ENCODE measurements at regions of chr1 and their contacts with region 1.

Region 1: GRCh38 chr1:43814401-43814800 is 107.1 kb downstream of the ST3GAL3 start:
- DNase-seq: no peak

Region 2: DNA sequence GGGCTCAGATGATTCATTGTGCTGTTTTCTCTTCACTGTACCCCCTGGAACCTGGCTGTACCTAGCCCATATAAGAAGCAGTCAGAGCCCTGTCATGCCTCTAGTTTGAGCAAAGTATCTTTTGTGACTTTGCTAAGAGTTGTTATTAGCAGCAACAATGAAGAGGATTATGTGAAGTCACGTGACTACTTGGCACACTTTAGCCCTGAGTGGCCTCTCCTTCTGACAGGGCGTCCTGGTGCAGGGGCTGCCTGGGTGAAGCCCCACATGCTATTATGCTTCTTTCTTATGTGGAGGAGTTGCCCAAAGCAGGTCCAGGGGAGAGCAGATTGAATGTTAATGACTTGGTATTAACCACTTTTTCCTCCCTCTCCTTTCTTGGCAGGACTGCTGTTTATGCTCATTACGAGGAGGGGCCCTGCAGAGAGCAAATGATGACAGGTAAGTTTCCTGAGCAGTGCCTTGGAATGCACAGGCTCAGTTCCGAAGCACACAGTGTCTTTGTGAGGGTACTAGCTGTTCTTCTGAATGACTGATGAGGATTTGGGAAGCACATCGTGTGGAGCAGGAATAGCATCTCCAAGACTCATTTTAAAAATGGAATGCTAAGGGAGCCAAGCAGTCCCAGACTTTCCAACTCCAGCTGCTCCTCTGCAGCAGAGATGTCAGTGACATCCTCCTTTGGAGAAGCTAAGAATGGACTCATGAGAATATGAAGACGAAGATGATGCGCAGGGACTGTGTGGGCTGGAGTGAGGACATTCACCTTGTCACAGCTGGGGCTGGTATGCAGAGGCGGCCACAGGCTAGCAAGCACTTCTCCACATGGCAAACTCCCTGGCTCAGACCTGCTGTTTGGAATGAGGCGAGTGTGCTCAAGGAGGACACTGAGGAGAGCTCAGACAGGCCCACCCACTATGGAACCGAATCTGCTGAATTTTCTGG is 122.3 kb before region 1 on chr1:
- intact Hi-C with region 1: no loop called
- DNase-seq: no peak

Region 3: GRCh38 chr1:43779266-43779665 is 35.1 kb before region 1 on chr1:
- intact Hi-C with region 1: no loop called
- DNase-seq: no peak

Region 4: DNA sequence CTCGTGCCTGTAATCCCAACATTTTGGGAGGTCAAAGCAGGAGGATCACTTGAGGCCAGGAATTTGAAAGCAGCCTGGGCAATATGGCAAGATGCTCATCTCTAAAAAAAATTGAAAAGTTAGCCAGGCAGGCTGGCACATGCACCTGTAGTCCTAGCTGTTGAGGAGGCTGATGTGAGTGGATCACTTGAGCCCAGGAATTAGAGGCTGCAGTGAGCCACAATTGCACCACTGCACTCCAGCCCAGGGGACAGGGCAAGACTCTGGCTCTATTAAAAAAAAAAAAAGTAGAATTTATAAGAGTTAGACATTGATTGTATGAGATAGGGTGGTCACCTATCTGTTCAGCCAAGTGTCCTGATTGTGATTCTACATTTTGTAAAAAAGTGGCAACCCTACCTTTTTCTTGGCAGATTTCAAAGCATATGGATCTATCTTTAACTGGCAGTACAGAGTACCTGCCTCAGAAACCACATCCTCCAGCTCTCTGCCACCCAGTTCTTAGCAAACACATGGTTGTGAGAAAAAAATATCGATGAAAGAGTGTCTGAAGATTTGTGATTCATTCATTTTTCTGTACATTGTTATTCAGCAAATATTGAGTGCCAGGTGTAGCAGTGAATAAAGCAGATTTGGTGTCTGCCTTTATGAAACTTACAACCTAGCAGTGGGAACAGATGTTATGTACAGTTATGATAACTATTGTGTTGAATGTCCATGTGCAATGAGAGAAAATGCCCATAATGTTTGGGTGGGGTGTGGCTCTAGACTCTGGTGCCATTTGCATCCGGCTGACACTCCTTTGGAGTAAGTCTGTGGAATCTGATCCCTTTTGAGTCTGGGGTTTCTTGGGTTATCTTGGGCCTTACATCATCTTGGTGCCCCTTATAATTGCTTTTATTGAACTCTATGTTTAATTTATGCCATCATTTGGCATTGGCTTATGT is 24.5 kb before region 1 on chr1:
- intact Hi-C with region 1: loop called in 1 of 2 experiments (anchors 1 kb)
- DNase-seq: no peak